ENCODE measurements at regions of chr2 and their contacts with region 1.

Region 1: GRCh38 chr2:200901459-200902072 is 12.4 kb downstream of the NIF3L1 start:
- DNase-seq: peak; percentile 90 to 94
- ATAC-seq: peak; percentile 95 to 98
- H3K4me3 ChIP-seq: no peak overlapping the region
- H3K27ac ChIP-seq: no peak overlapping the region
- H3K4me1 ChIP-seq: peaks cover 12% of the 10 kb centered on the region; the same call in 1 of the 3 replicates
- CTCF ChIP-seq: peak; percentile 87
- EP300 ChIP-seq: no peak
- POLR2A ChIP-seq: no peak
- RAD21 ChIP-seq: peak; percentile 85 to 88

Region 2: DNA sequence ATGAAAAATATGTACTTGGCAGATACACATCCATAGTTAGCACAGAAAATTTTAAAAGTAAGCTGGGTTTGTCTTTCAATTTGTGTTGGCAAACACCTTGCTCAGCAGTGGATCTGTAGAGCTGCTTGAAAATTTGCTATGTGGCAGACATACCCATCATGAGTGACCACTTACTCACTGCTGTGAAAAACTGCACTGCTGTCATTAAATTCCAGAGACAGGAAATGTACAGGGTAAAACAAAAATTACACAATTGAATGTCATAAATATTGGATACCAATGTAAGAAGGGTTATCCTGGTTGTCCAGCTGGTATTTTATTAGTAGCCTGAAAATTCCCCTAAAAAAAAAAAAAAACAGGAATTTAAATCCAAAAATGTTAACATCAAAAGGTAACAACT is 12.1 kb after region 1 on chr2:
- CTCF ChIA-PET with region 1: interaction called, 16 read pairs
- POLR2A ChIA-PET with region 1: no interaction called
- DNase-seq: no peak
- ATAC-seq: no peak
- H3K4me3 ChIP-seq: no peak overlapping the region
- H3K27ac ChIP-seq: no peak overlapping the region
- H3K4me1 ChIP-seq: no peaks in the 10 kb centered on the region
- CTCF ChIP-seq: no peak
- EP300 ChIP-seq: no peak
- POLR2A ChIP-seq: no peak
- RAD21 ChIP-seq: no peak

Region 3: DNA sequence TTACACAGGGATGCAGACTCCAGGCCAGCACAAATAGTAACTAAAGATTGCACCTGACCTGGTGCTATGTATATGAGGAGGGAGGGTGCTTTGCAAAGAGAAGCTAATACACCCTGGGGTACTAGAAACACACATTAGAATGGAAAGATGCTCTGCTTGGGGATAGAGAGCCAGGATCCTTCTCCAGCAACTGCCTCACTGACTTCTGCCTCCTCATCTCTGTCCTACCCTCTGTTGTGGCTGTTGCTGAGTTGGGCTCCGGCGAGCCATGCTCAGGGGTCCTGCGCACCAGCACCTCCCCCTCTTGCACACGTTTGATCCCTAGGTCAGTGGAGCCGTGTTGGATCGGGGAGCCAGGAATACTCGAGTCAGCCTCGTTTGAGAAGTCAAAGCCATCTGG is 85.6 kb after region 1 on chr2:
- CTCF ChIA-PET with region 1: no interaction called
- POLR2A ChIA-PET with region 1: no interaction called
- DNase-seq: no peak
- ATAC-seq: no peak
- H3K4me3 ChIP-seq: no peak overlapping the region
- H3K27ac ChIP-seq: no peak overlapping the region
- H3K4me1 ChIP-seq: no peaks in the 10 kb centered on the region
- CTCF ChIP-seq: no peak
- EP300 ChIP-seq: no peak
- POLR2A ChIP-seq: 0 out of 2 replicates have a peak, but pooled peaks have one; percentile 9
- RAD21 ChIP-seq: no peak

Region 4: GRCh38 chr2:201182650-201183364 is 281.2 kb after region 1 on chr2 and contains the start of gene CASP10:
- CTCF ChIA-PET with region 1: interaction called, 34 read pairs
- POLR2A ChIA-PET with region 1: interaction called, 3 read pairs
- DNase-seq: peak; percentile 84 to 89
- ATAC-seq: peak; percentile 95 to 97
- H3K4me3 ChIP-seq: peak within 1 kb of the TSS; percentile 52
- H3K27ac ChIP-seq: peak within 1 kb of the TSS; percentile 73 to 85
- H3K4me1 ChIP-seq: peaks cover 11% of the 10 kb centered on the region; the same call in 2 of the 3 replicates
- CTCF ChIP-seq: peak; percentile 71
- EP300 ChIP-seq: no peak
- POLR2A ChIP-seq: no peak
- RAD21 ChIP-seq: peak; percentile 68 to 77
- polyA plus RNA-seq, gene CASP10: 6.5 and 6.8 TPM in 2 replicates

Measured in A549 (cell line).